MCF 10A (cell line): ENCODE measurements at regions of chr14 and their contacts with region 1.

Region 1: GRCh38 chr14:36647824-36648753 is 13.6 kb upstream of the PAX9 start:
- DNase-seq: peak; percentile 63
- H3K4me3 Mint-ChIP-seq: peak overlapping the region; percentile 71
- H3K27ac Mint-ChIP-seq: no peak overlapping the region
- H3K4me1 Mint-ChIP-seq: peaks cover 5% of the 10 kb centered on the region
- H3K27me3 Mint-ChIP-seq: no peaks in the 10 kb centered on the region
- CTCF ChIP-seq: peak; percentile 65

Region 2: GRCh38 chr14:36634248-36634647 is 13.8 kb before region 1 on chr14:
- CTCF ChIA-PET with region 1: interaction called, 21 read pairs
- POLR2A ChIA-PET with region 1: no interaction called
- intact Hi-C with region 1: no loop called
- DNase-seq: no peak
- H3K4me3 Mint-ChIP-seq: no peak overlapping the region
- H3K27ac Mint-ChIP-seq: no peak overlapping the region
- H3K4me1 Mint-ChIP-seq: no peaks in the 10 kb centered on the region
- H3K27me3 Mint-ChIP-seq: no peaks in the 10 kb centered on the region
- CTCF ChIP-seq: no peak

Region 3: GRCh38 chr14:36747411-36748184 is 99.5 kb after region 1 on chr14:
- CTCF ChIA-PET with region 1: interaction called, 12 read pairs
- POLR2A ChIA-PET with region 1: no interaction called
- intact Hi-C with region 1: loop called (anchors 1 kb)
- DNase-seq: peak; percentile 43
- H3K4me3 Mint-ChIP-seq: no peak overlapping the region
- H3K27ac Mint-ChIP-seq: no peak overlapping the region
- H3K4me1 Mint-ChIP-seq: no peaks in the 10 kb centered on the region
- H3K27me3 Mint-ChIP-seq: no peaks in the 10 kb centered on the region
- CTCF ChIP-seq: peak; percentile 51

Region 4: DNA sequence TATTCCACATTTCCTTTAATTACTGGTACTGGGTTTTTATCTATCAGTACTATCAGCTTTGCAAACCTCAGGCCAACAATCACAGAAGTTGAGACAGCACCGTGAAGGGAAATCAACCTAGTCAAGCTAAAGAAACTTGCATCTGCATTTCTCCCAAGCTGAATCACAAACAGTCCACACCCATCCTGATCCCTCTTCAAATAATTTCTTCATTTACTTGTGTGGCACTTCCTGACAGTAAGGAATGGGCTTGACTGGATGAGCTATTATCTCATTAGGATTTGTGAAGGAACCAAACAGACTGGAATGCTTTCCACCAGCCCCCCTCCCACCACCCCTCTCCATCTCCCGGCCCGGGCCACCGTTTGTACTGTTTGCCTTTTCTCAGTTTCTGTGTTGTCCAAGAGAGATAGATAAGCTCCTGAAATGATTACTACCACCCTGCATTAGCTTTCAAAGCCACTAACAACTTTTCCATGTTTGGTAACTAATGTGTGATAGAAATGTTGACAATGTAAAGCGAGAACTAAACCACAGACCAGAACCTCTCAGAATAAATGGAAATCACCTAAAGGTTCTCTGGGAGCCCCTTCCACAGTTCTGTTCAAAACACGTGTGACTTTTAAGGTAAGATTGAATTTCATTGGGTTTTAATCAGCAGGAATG is 288.1 kb after region 1 on chr14:
- CTCF ChIA-PET with region 1: interaction called, 157 read pairs
- POLR2A ChIA-PET with region 1: interaction called, 15 read pairs
- intact Hi-C with region 1: no loop called
- DNase-seq: no peak
- H3K4me3 Mint-ChIP-seq: no peak overlapping the region
- H3K27ac Mint-ChIP-seq: peak overlapping the region; percentile 67
- H3K4me1 Mint-ChIP-seq: peaks cover 6% of the 10 kb centered on the region
- H3K27me3 Mint-ChIP-seq: no peaks in the 10 kb centered on the region
- CTCF ChIP-seq: no peak

Region 5: DNA sequence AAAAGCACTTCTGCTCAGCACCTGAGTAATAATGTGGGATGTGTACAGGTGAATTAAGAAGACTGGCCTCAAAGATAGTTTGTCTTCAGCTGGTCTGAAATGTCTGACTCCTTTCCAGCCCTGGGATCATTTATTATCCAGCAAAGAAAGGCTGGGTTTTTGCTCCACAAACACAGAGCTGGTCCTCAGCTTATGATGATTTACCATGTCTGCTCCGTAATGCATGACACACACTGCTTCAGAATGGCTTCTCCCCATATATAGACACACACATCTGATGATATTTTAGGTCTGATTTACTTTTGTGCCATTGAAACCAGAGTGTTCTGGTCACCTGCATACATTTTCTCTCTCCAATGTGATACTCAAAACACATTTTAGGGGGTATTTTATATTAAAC is 299.3 kb after region 1 on chr14:
- CTCF ChIA-PET with region 1: interaction called, 157 read pairs
- POLR2A ChIA-PET with region 1: interaction called, 15 read pairs
- intact Hi-C with region 1: loop called (anchors 1 kb)
- DNase-seq: no peak
- H3K4me3 Mint-ChIP-seq: no peak overlapping the region
- H3K27ac Mint-ChIP-seq: no peak overlapping the region
- H3K4me1 Mint-ChIP-seq: peaks cover 21% of the 10 kb centered on the region
- H3K27me3 Mint-ChIP-seq: no peaks in the 10 kb centered on the region
- CTCF ChIP-seq: no peak

Region 6: GRCh38 chr14:37230551-37231194 is 582.6 kb after region 1 on chr14:
- CTCF ChIA-PET with region 1: interaction called, 4 read pairs
- POLR2A ChIA-PET with region 1: no interaction called
- intact Hi-C with region 1: loop called (anchors 1 kb)
- DNase-seq: peak; percentile 68
- H3K4me3 Mint-ChIP-seq: no peak overlapping the region
- H3K27ac Mint-ChIP-seq: no peak overlapping the region
- H3K4me1 Mint-ChIP-seq: no peaks in the 10 kb centered on the region
- H3K27me3 Mint-ChIP-seq: no peaks in the 10 kb centered on the region
- CTCF ChIP-seq: peak; percentile 63